Breast epithelium (tissue), 4 donors: ENCODE measurements at regions of chr16 and their contacts with region 1.

Region 1: DNA sequence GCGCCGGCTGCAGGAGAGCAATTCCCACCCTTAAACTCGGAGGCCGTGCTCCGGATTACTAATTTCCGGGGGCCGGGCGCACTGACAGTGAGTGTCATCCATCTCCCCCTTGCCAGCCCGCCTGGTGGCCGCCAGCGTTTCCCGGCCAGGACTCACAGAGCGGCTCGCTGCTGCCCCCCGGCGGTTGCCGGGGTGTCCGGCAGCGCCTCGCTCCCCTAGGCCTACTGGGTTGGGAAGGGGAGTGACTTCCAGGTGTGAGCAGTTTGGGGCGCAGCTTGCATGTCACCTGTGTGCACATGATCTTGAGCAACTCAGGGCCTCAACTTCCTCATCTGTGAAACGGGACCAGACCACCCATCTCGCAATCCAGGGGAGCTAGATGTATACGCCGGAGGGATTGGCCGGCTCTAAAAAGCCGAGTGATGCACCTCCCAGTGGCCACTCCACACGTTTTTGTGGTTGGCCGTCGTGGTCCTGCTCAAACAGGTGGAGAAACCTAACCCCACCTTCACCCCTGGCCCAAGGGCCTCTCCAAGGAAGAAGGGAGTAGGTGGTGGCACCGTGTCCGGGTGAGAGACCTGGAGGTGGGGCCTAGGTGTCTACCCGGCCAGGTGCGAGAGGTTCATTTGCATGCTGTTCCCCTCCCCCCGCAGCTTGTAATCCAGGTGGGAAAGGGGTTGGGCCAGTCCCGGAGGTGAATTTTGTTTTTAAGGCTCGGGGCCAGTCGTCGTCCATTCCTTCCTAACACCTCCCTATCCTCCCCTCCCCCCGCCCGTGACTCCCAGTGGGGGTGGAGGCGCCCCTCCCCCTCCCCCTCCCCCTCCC is 2.4 kb upstream of the GSE1 start:
- DNase-seq: peak; percentile 89 to 92
- H3K4me3 ChIP-seq: peak overlapping the region; percentile 56 to 79 (median 70)
- H3K27ac ChIP-seq: peak overlapping the region; percentile 98 to 99
- H3K4me1 ChIP-seq: peaks cover 18 to 27% of the 10 kb centered on the region in 2 donors
- H3K27me3 ChIP-seq: no peaks in the 10 kb centered on the region
- CTCF ChIP-seq: peak; percentile 97 to 99 (median 99)
- POLR2A ChIP-seq: no peak

Region 2: GRCh38 chr16:84013787-84014569 is 1596.7 kb before region 1 on chr16:
- intact Hi-C with region 1: no loop called
- DNase-seq: peak in 1 of 2 donors; percentile 27
- H3K4me3 ChIP-seq: no peak overlapping the region
- H3K27ac ChIP-seq: no peak overlapping the region
- H3K4me1 ChIP-seq: no peaks in the 10 kb centered on the region
- H3K27me3 ChIP-seq: no peaks in the 10 kb centered on the region
- CTCF ChIP-seq: no peak
- POLR2A ChIP-seq: no peak

Region 3: GRCh38 chr16:84738255-84739038 is 872.3 kb before region 1 on chr16:
- intact Hi-C with region 1: no loop called
- DNase-seq: peak; percentile 57 to 73
- H3K4me3 ChIP-seq: no peak overlapping the region
- H3K27ac ChIP-seq: no peak overlapping the region
- H3K4me1 ChIP-seq: peaks cover 0 to 4% of the 10 kb centered on the region in 2 donors
- H3K27me3 ChIP-seq: no peaks in the 10 kb centered on the region
- CTCF ChIP-seq: peak; percentile 65 to 80 (median 75)
- POLR2A ChIP-seq: no peak

Region 4: DNA sequence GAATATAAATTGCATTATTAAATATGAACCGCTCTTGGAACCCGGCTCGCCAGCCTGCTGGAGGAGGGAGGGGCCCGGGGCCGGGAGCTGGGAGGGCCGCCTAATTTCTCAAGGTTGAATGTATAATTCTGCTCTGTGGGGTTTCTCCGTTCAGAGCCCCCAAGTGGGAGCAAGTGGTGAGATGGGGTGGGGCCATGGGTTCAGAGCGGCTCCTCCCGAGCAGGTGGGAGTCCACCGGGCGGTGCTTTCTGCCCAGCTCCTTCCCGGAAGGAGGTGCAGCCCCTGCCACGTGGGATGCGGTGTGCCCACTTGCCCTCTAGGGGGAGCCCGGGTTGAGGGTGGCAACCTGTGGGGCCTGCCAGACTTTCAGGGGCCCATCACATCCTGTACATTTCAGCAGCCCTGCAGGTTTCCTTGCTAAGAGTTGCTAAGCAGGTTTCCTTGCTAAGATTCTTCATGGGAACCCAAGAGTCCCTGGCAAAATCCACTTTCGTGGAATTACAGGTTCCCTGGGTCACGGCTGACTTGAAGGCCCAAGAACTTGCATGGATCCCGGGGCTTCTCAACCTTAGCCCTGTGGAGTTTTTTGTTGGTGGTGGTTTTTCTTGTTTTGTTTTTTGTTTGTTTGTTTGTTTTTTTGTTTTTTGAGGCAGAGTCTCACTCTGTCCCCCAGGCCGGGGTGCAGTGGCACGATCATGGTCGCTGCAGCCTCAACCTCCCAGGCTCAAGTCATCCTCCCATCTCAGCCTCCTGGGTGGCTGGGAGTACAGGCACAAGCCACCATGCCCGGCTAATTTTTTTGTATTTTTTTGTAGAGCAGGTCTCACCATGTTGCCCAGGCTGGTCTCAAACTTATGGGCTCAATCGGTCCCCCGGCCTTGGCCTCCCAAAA is 194.2 kb before region 1 on chr16:
- intact Hi-C with region 1: loop called (anchors 5 kb)
- DNase-seq: peak in 1 of 2 donors; percentile 74
- H3K4me3 ChIP-seq: no peak overlapping the region
- H3K27ac ChIP-seq: no peak overlapping the region
- H3K4me1 ChIP-seq: no peaks in the 10 kb centered on the region
- H3K27me3 ChIP-seq: no peaks in the 10 kb centered on the region
- CTCF ChIP-seq: peak; percentile 39 to 64 (median 50)
- POLR2A ChIP-seq: no peak

Region 5: DNA sequence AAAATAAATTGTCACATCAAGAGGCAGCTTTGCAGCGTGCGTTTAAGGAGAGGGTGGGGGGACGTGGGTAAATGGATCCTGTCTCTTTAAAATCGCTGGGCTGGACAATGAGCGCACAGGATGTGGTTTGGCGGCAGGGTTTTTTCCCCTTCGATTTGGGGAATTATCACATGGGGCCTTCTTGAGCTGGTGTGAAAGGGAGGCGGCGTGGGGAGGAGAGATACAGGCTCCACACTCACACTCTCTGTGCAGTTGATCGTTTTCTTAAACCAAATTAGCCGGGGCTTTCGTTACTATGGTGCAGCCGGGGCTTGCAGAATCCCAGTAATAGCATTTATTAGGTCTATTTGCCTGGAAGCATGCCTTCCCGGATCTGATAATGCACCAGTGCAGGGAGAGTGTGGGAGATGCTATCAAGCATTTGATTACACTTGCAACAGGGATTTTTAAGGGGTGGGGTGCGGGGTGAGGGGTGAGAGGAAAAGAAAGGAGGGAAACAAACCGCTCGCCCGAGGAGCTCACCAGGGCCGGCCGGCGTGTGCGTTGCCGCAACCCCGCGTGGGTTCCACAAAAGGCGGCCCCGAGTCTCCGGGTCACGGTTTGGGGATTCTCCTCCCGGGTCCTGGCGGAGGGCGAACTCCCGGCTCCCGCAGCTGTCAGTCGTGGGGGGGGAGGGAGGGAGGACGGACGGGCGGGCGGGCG is 56.5 kb before region 1 on chr16:
- intact Hi-C with region 1: loop called (anchors 10 kb)
- DNase-seq: peak in 1 of 2 donors; percentile 59
- H3K4me3 ChIP-seq: peak overlapping the region; percentile 59 to 92 (median 82)
- H3K27ac ChIP-seq: peak overlapping the region; percentile 91 to 95
- H3K4me1 ChIP-seq: peaks cover 3 to 13% of the 10 kb centered on the region in 2 donors
- H3K27me3 ChIP-seq: no peaks in the 10 kb centered on the region
- CTCF ChIP-seq: no peak
- POLR2A ChIP-seq: no peak

Region 6: DNA sequence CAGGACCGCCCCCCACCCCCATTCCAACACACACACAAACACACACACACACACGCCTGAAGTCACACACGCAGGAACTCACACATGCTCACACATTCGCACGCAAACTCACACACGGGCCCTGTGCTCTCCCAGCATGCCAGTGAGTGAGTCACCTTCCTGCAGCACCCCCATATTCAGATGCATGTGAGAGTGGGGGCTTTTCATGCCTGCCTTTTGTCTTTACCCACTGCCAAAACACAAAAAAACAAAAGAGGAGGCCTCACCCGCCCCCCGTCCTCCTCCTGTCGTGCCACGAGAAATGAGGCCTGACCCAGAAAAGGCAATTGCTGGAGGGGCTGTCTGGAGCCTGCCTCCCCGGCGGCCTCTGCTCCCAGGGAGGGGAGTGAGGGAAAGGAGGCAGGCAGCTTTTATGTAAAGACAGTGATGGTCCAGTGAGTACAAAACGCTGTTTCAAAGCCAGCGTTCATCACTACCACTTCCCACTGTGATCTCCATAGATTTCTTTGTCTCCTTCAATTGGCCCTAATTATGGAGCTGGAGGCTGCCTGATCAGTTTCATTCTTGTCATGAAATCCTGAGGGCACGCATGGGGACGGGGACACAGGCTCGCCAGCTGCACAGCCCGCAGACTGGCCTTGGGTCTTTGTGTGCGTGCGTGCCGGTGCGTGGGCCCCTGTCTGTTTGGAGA is 27.1 kb before region 1 on chr16:
- intact Hi-C with region 1: no loop called
- DNase-seq: no peak
- H3K4me3 ChIP-seq: no peak overlapping the region
- H3K27ac ChIP-seq: no peak overlapping the region
- H3K4me1 ChIP-seq: peaks cover 0 to 8% of the 10 kb centered on the region in 2 donors
- H3K27me3 ChIP-seq: no peaks in the 10 kb centered on the region
- CTCF ChIP-seq: no peak
- POLR2A ChIP-seq: no peak